ENCODE measurements at regions of chr22 and their contacts with region 1.

Region 1: GRCh38 chr22:22074634-22075381 is 92.2 kb upstream of the TOP3B start:
- DNase-seq: no peak
- ATAC-seq: no peak
- H3K4me3 ChIP-seq: no peak overlapping the region
- H3K4me3 Mint-ChIP-seq: no peak overlapping the region
- H3K27ac ChIP-seq: no peak overlapping the region
- H3K27ac Mint-ChIP-seq: no peak overlapping the region
- H3K4me1 ChIP-seq: no peaks in the 10 kb centered on the region
- H3K4me1 Mint-ChIP-seq: no peaks in the 10 kb centered on the region
- H3K27me3 ChIP-seq: peaks cover 0 to 15% of the 10 kb centered on the region in 2 experiments
- H3K27me3 Mint-ChIP-seq: peaks cover 40% of the 10 kb centered on the region
- CTCF ChIP-seq: no peak

Region 2: GRCh38 chr22:22009661-22010060 is 65.1 kb before region 1 on chr22:
- CTCF ChIA-PET with region 1: no interaction called
- POLR2A ChIA-PET with region 1: no interaction called
- intact Hi-C with region 1: no loop called
- DNase-seq: no peak
- ATAC-seq: no peak
- H3K4me3 ChIP-seq: no peak overlapping the region
- H3K4me3 Mint-ChIP-seq: no peak overlapping the region
- H3K27ac ChIP-seq: no peak overlapping the region
- H3K27ac Mint-ChIP-seq: no peak overlapping the region
- H3K4me1 ChIP-seq: no peaks in the 10 kb centered on the region
- H3K4me1 Mint-ChIP-seq: no peaks in the 10 kb centered on the region
- H3K27me3 ChIP-seq: peaks cover 8 to 18% of the 10 kb centered on the region in 2 experiments
- H3K27me3 Mint-ChIP-seq: peaks cover 26% of the 10 kb centered on the region
- CTCF ChIP-seq: no peak

Region 3: GRCh38 chr22:22030493-22031182 is 44.2 kb before region 1 on chr22:
- CTCF ChIA-PET with region 1: no interaction called
- POLR2A ChIA-PET with region 1: no interaction called
- intact Hi-C with region 1: loop called in 1 of 2 experiments (anchors 5 kb)
- DNase-seq: no peak
- ATAC-seq: no peak
- H3K4me3 ChIP-seq: no peak overlapping the region
- H3K4me3 Mint-ChIP-seq: no peak overlapping the region
- H3K27ac ChIP-seq: no peak overlapping the region
- H3K27ac Mint-ChIP-seq: no peak overlapping the region
- H3K4me1 ChIP-seq: no peaks in the 10 kb centered on the region
- H3K4me1 Mint-ChIP-seq: no peaks in the 10 kb centered on the region
- H3K27me3 ChIP-seq: peaks cover 0 to 4% of the 10 kb centered on the region in 2 experiments
- H3K27me3 Mint-ChIP-seq: peaks cover 12% of the 10 kb centered on the region
- CTCF ChIP-seq: no peak

Region 4: DNA sequence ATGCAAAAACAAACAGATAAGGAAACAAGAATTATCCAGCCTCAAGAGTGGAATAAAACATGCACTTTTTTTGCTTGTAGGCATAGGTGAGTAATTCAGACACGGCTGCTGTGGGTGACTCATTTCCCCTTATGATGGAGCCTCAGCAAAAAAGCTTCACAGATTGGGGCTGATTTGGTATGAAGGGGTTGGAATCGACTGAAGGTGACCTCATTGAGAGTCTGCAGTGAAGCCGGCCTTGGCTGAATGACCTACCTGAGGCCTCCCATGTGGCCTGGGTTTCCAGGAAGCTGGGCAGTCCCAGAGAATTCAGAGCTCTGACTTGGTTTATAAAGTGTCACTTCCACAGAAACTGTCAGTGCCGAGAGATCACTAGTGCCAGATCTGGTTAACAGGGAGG is 135.6 kb after region 1 on chr22:
- CTCF ChIA-PET with region 1: no interaction called
- POLR2A ChIA-PET with region 1: no interaction called
- intact Hi-C with region 1: no loop called
- DNase-seq: peak in 7 of 14 experiments; percentile 15 to 58 (median 23)
- ATAC-seq: peak; percentile 65
- H3K4me3 ChIP-seq: no peak overlapping the region
- H3K4me3 Mint-ChIP-seq: no peak overlapping the region
- H3K27ac ChIP-seq: peak overlapping the region in 1 of 2 donors; percentile 54
- H3K27ac Mint-ChIP-seq: peak overlapping the region; percentile 80
- H3K4me1 ChIP-seq: peaks cover 18% of the 10 kb centered on the region
- H3K4me1 Mint-ChIP-seq: peaks cover 33% of the 10 kb centered on the region
- H3K27me3 ChIP-seq: no peaks in the 10 kb centered on the region
- H3K27me3 Mint-ChIP-seq: no peaks in the 10 kb centered on the region
- CTCF ChIP-seq: no peak